ENCODE measurements at regions of chr1 and their contacts with region 1.

Region 1: DNA sequence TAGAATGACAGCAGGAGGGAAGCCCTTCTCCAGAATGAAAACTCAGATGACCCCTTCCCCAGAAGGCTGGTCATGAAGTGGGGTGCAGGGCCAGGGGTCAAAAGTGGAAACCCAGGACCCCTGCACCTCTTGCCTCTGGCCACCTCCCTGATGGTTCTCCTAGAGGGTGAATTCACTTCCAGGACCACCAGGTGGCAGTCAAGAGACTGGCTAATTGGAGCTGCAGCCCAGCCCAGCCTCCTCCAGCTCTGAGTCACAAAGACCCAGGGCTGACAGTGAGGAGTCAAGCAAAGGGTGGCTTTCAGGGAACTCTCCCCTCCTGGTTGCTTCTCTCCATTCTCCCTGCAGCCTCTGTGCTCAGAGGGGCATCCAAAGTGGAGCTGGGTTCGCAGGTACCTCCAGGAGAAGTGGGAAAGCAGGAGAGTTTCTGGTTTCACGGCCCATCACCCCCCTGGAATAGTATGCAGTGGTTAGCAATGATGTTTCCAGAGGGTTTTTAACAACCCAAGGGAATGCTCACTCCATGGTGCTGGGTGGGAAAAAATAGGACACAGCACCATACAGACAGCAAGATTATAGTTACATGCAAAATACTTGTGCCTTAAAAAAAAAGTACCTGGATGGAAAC is 6.1 kb upstream of the EPHB2 start:
- DNase-seq: peak; percentile 83
- H3K4me3 ChIP-seq: no peak overlapping the region; a peak in 1 of 4 replicates
- H3K27ac ChIP-seq: no peak overlapping the region
- H3K4me1 ChIP-seq: peaks cover 2 to 8% of the 10 kb centered on the region in 2 experiments; a peak in 2 of 4 replicates
- H3K27me3 ChIP-seq: no peaks in the 10 kb centered on the region
- CTCF ChIP-seq: peak; percentile 88
- EP300 ChIP-seq: no peak
- RAD21 ChIP-seq: peak; percentile 89

Region 2: DNA sequence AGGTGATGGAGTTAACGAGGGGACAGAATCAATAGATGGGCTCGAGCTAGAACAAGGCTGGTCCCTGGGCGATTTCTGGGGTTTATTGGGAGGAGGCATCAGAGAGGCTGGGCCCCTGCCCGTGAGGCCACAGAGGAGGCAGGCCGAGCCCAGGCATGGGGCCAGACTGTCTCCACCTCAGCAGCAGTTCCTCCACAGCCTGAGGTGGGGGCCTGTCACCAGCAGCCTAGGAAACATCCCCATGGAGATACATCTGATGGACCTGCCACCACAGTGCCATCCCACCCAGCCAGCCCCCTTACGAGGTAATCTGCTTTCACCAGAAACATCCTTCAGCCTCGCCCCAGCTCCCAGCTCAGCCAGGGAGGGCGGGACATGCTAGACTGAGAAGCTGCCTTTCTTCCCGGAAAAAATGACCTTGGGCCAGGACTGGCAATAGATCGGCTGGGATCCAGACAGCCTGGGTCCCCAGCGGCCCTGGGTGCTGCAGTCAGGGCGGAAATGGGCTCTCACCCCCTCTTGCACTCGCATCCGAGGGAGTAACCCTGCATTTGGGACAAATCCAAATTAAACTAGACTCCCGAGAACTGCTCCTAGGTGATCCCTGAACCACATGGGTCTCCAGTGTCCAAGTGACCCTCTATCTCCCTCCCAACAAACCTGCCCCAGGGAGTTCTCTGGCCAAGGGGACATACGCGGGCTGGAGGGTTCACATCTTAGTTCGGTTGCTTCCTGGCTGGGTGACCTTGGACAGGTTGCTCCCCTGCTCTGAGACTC is 151.3 kb before region 1 on chr1:
- CTCF ChIA-PET with region 1: no interaction called
- POLR2A ChIA-PET with region 1: no interaction called
- DNase-seq: peak; percentile 65
- H3K4me3 ChIP-seq: no peak overlapping the region
- H3K27ac ChIP-seq: 0 out of 4 replicates have a peak overlapping the region, but pooled peaks of 1 of the 2 experiments have one; percentile 14
- H3K4me1 ChIP-seq: peaks cover 0 to 43% of the 10 kb centered on the region in 2 experiments; a peak in 1 of 4 replicates
- H3K27me3 ChIP-seq: no peaks in the 10 kb centered on the region; the same call in 1 of the 2 replicates
- CTCF ChIP-seq: no peak
- EP300 ChIP-seq: no peak
- RAD21 ChIP-seq: no peak

Region 3: DNA sequence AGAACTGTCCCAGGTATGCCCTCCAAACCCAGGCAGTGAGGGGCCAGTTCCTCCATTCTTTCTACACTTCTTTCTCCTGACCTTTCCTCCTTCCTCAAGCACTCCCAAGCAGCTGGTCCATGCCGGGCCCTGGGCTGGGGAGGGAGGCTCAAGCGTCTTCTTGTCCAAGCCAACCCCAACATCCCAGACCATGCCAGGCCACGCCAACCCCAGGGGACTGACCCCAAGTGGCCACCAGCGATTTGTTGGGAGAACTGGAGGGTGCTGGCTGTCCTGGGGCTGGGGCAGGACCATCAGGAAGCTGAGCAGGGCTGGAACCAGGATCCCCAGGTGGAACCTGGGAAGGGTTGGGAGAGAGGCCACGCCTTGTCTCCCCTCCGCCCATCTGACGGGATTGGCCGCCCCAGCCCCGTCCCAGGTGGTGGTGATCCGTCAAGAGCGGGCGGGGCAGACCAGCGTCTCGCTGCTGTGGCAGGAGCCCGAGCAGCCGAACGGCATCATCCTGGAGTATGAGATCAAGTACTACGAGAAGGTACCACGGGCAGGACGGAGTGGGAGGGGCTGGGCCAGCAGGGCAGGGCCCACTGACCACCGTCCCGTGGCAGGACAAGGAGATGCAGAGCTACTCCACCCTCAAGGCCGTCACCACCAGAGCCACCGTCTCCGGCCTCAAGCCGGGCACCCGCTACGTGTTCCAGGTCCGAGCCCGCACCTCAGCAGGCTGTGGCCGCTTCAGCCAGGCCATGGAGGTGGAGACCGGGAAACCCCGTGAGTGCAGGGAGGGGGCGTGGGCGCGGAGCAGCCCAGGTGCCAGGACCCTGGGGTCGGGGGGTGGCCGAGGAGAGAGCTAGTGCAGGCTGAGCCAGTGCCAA is 111.4 kb before region 1 on chr1:
- CTCF ChIA-PET with region 1: no interaction called
- POLR2A ChIA-PET with region 1: no interaction called
- DNase-seq: no peak
- H3K4me3 ChIP-seq: no peak overlapping the region
- H3K27ac ChIP-seq: no peak overlapping the region
- H3K4me1 ChIP-seq: peaks cover 0 to 6% of the 10 kb centered on the region in 2 experiments; a peak in 1 of 4 replicates
- H3K27me3 ChIP-seq: 0 out of 2 replicates have a peak, but pooled peaks cover 3% of the 10 kb centered on the region
- CTCF ChIP-seq: no peak
- EP300 ChIP-seq: no peak
- RAD21 ChIP-seq: no peak

Region 4: DNA sequence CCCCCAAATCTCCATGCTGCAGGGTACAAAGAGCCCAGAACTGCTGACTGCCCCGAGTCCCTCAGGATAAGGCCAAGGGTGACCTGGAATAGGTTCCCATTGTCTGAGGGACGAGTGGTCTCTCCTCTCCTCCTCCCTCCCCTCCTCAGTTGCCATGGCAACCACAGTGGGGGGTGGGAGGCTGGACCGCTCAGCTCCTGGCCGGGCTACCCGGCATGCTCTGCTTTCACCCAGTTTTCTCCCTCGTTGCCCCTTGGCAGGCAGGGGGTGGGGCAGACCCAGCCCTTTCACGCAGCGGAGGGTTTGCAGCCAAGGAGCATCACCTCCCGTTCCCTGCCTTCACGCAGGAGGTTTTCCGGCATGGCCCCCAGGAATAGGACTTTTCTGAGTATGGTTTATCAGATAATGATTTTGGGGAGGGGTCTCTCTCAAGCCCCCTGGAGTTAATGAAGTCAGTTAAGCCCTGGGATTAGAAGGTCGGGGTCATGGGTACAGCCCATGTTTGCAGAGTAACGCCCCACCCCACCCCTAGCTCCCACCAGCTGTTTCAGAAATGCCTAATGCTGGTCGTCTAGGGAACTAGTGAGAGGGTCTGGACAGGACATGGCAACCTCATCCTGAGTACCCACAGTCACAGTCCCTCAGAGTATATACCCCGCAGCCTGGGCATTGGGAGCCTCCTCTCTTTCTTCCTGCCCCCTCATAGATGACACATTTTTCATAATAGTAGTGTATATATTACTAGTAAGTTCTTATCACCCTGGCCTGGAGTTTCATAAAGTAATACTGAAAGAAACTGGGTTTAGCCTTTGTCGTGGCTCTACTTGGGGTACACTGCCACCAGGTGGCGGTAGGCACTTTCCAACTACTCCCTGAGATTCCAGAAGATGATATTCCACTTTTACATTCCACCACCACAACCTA is 30.8 kb before region 1 on chr1:
- CTCF ChIA-PET with region 1: interaction called, 45 read pairs
- POLR2A ChIA-PET with region 1: no interaction called
- DNase-seq: peak; percentile 87
- H3K4me3 ChIP-seq: no peak overlapping the region; a peak in 1 of 4 replicates
- H3K27ac ChIP-seq: no peak overlapping the region
- H3K4me1 ChIP-seq: no peaks in the 10 kb centered on the region; a peak in 1 of 4 replicates
- H3K27me3 ChIP-seq: peaks cover 12% of the 10 kb centered on the region; the same call in 1 of the 2 replicates
- CTCF ChIP-seq: peak; percentile 95
- EP300 ChIP-seq: no peak
- RAD21 ChIP-seq: peak; percentile 94

Region 5: GRCh38 chr1:22722901-22723550 is 18.5 kb after region 1 on chr1:
- CTCF ChIA-PET with region 1: interaction called, 13 read pairs
- POLR2A ChIA-PET with region 1: interaction called, 3 read pairs
- DNase-seq: no peak
- H3K4me3 ChIP-seq: no peak overlapping the region
- H3K27ac ChIP-seq: no peak overlapping the region
- H3K4me1 ChIP-seq: no peaks in the 10 kb centered on the region; a peak in 1 of 4 replicates
- H3K27me3 ChIP-seq: no peaks in the 10 kb centered on the region
- CTCF ChIP-seq: no peak
- EP300 ChIP-seq: no peak
- RAD21 ChIP-seq: no peak

Region 6: DNA sequence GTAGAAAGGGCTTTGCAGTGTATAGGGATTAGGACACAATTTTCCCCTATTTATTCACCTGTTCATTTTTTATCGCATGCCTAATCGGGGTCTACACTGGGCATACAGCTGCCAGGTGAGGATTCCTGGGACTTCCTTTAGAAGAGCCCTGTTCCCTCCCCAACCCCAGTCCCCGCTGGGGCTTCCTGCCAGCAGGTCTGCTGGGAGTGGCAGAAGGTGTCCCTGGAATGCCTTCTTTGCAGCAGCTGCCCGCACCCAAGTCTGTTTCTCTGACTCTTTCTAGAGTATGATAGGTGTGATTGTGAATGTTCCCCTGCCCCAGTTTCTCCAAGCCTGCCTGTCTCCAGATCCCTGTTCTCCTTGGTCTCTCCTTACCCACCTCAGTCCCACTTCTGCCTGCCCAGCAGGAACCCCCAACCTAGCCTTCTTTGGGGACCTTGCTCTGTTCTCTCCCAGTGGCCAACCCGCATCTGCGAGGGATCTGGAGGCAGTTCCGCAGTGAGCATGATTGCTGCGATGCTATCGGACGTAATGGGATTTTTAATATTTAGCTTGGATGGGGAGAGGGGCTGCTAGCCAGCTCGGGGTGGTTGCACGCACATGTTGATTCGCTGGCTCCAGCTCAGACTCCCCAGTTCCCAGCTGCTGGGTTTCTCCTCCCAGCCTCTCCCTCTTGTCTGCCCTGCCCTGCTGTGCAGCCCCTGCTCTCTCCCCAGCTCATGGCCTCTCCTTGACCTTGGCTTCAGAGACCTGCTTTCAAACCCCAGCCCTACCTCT is 85.9 kb after region 1 on chr1:
- CTCF ChIA-PET with region 1: interaction called, 11 read pairs
- POLR2A ChIA-PET with region 1: no interaction called
- DNase-seq: peak; percentile 90
- H3K4me3 ChIP-seq: no peak overlapping the region
- H3K27ac ChIP-seq: peak overlapping the region in 1 of 2 experiments; percentile 85; a peak in 2 of 4 replicates
- H3K4me1 ChIP-seq: peaks cover 0 to 53% of the 10 kb centered on the region in 2 experiments; a peak in 2 of 4 replicates
- H3K27me3 ChIP-seq: no peaks in the 10 kb centered on the region
- CTCF ChIP-seq: no peak
- EP300 ChIP-seq: peak in 1 of 2 experiments; percentile 87; a peak in 2 of 4 replicates
- RAD21 ChIP-seq: peak; percentile 25; the same call in 1 of the 2 replicates

Region 7: GRCh38 chr1:22889213-22889827 is 184.8 kb after region 1 on chr1:
- CTCF ChIA-PET with region 1: interaction called, 71 read pairs
- POLR2A ChIA-PET with region 1: no interaction called
- DNase-seq: peak; percentile 75
- H3K4me3 ChIP-seq: no peak overlapping the region
- H3K27ac ChIP-seq: peak overlapping the region in 1 of 2 experiments; percentile 29; a peak in 1 of 4 replicates
- H3K4me1 ChIP-seq: peaks cover 0 to 9% of the 10 kb centered on the region in 2 experiments; a peak in 1 of 4 replicates
- H3K27me3 ChIP-seq: no peaks in the 10 kb centered on the region
- CTCF ChIP-seq: peak; percentile 84
- EP300 ChIP-seq: no peak
- RAD21 ChIP-seq: peak; percentile 85

Region 8: GRCh38 chr1:22930235-22930912 is 225.8 kb after region 1 on chr1:
- CTCF ChIA-PET with region 1: interaction called, 41 read pairs
- POLR2A ChIA-PET with region 1: no interaction called
- DNase-seq: peak; percentile 89
- H3K4me3 ChIP-seq: no peak overlapping the region
- H3K27ac ChIP-seq: no peak overlapping the region
- H3K4me1 ChIP-seq: no peaks in the 10 kb centered on the region
- H3K27me3 ChIP-seq: no peaks in the 10 kb centered on the region; the same call in 1 of the 2 replicates
- CTCF ChIP-seq: peak; percentile 80
- EP300 ChIP-seq: no peak
- RAD21 ChIP-seq: peak; percentile 88

Measured in SK-N-SH (cell line).